ENCODE measurements at regions of chr14 and their contacts with region 1.

Region 1: DNA sequence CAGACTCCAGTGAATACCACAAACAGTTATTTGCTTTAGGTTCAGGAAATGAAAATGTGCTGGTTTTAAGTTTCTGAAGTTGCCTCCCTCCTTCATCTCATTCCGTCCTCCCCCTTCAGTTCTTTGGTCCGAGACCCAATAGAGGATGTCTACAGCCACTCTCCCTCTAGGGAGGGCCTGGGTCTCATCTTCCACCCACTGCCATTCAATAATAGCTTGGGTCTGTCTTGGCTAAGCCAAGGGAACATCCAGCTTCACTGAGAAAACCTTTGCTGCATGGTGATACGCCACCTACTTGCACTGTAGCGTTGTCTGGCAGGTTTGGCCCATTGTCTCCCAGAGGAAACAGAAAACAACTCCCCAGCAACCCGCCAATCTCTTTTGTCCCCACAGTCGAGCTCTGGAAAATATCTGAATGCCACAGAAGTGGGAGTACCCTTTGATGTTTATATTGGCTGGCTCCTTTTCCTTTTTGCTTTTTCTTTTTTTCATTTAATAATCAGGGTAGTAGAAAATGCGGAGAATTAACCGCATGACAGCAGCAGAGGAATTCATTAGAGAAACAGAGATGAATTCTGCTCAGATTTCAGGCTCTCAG is 380.1 kb downstream of the RAD51B start:
- DNase-seq: no peak
- ATAC-seq: no peak
- H3K4me3 ChIP-seq: no peak overlapping the region
- H3K4me3 Mint-ChIP-seq: peak overlapping the region in 1 of 10 donors; percentile 14
- H3K27ac ChIP-seq: no peak overlapping the region
- H3K27ac Mint-ChIP-seq: peak overlapping the region in 1 of 9 donors; percentile 51
- H3K4me1 ChIP-seq: no peaks in the 10 kb centered on the region
- H3K4me1 Mint-ChIP-seq: peaks cover 2 to 15% (median 13%) of the 10 kb centered on the region in 7 donors
- H3K27me3 ChIP-seq: no peaks in the 10 kb centered on the region
- H3K27me3 Mint-ChIP-seq: no peaks in the 10 kb centered on the region

Region 2: GRCh38 chr14:68181519-68182326 is 17.9 kb before region 1 on chr14:
- CTCF ChIA-PET with region 1: no interaction called
- POLR2A ChIA-PET with region 1: no interaction called
- intact Hi-C with region 1: loop called in 1 of 2 experiments (anchors 2 kb)
- DNase-seq: no peak
- ATAC-seq: no peak
- H3K4me3 ChIP-seq: no peak overlapping the region
- H3K4me3 Mint-ChIP-seq: no peak overlapping the region
- H3K27ac ChIP-seq: no peak overlapping the region
- H3K27ac Mint-ChIP-seq: peak overlapping the region in 2 of 9 donors; percentile 1 to 44
- H3K4me1 ChIP-seq: peaks cover 0 to 4% of the 10 kb centered on the region in 2 donors
- H3K4me1 Mint-ChIP-seq: peaks cover 8 to 33% (median 26%) of the 10 kb centered on the region in 7 donors
- H3K27me3 ChIP-seq: no peaks in the 10 kb centered on the region
- H3K27me3 Mint-ChIP-seq: no peaks in the 10 kb centered on the region

Measured in naive thymus-derived CD4-positive, alpha-beta T cell (primary cell).